Right cardiac atrium (tissue), 5 donors: ENCODE measurements at regions of chr19 and their contacts with region 1.

Region 1: GRCh38 chr19:12777217-12778016 is 2.1 kb upstream of the HOOK2 start:
- DNase-seq: peak; percentile 86 to 94 (median 93)
- ATAC-seq: peak; percentile 55 to 58
- H3K4me3 ChIP-seq: peak overlapping the region; percentile 59
- H3K27ac ChIP-seq: peak overlapping the region; percentile 65
- H3K4me1 ChIP-seq: peaks cover 6% of the 10 kb centered on the region
- H3K27me3 ChIP-seq: no peaks in the 10 kb centered on the region

Region 2: GRCh38 chr19:12793290-12794199 is 16.1 kb after region 1 on chr19:
- intact Hi-C with region 1: loop called in 2 of 4 experiments (anchors 2 kb)
- DNase-seq: peak; percentile 93 to 97 (median 97)
- ATAC-seq: peak; percentile 45 to 48
- H3K4me3 ChIP-seq: peak overlapping the region; percentile 82
- H3K27ac ChIP-seq: peak overlapping the region; percentile 94
- H3K4me1 ChIP-seq: no peaks in the 10 kb centered on the region
- H3K27me3 ChIP-seq: no peaks in the 10 kb centered on the region